ENCODE measurements at regions of chr2 and their contacts with region 1.

Region 1: DNA sequence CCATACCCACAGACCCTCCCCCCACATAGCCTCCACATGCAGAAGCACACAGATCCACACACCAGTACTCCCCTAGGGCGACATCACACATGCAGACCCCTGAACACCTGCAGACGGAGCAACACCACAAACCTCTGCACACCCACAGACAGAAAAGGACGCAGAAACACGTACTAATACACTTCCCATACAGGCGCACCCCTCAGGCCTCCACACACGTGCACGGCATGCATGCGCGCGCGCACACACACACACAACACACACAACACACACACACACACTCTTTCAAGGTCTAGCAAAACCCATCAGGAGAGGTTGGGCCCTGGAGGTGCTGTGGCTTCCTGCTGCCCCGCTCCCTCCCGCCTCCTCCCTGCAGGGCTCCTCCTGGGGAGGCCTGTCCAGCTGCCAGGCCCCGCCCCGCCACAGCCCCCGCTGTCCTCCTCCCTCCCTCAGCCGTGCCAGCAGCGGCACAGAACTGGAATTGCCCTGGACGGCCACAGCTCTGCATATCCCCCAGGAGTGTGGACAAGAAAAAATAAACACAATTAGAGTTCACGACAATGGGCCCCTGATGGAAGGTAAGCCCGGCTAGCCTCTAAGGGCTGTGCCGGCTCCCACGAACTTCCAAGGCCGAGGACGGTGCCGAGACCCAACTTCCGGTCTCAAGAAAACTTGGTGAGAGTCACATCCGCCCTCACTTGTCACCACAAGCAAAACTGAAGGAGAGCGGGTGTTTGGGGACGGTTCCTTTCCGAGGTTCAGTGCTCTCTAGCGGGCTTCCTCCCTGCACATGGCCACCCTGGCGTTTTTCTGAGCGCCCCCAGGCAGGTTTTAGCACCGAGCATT is 6.8 kb downstream of the ZFP36L2 start:
- DNase-seq: peak; percentile 81 to 91
- H3K4me3 ChIP-seq: peak overlapping the region; percentile 72
- H3K27ac ChIP-seq: peak overlapping the region; percentile 92
- H3K4me1 ChIP-seq: peaks cover 51% of the 10 kb centered on the region
- H3K27me3 ChIP-seq: no peaks in the 10 kb centered on the region
- CTCF ChIP-seq: no peak; the same call in 1 of the 2 replicates

Region 2: GRCh38 chr2:42147641-42148274 is 1071.8 kb before region 1 on chr2:
- CTCF ChIA-PET with region 1: no interaction called
- POLR2A ChIA-PET with region 1: interaction called, 12 read pairs
- intact Hi-C with region 1: no loop called
- DNase-seq: no peak
- H3K4me3 ChIP-seq: no peak overlapping the region
- H3K27ac ChIP-seq: no peak overlapping the region
- H3K4me1 ChIP-seq: peaks cover 9% of the 10 kb centered on the region
- H3K27me3 ChIP-seq: no peaks in the 10 kb centered on the region
- CTCF ChIP-seq: no peak

Region 3: DNA sequence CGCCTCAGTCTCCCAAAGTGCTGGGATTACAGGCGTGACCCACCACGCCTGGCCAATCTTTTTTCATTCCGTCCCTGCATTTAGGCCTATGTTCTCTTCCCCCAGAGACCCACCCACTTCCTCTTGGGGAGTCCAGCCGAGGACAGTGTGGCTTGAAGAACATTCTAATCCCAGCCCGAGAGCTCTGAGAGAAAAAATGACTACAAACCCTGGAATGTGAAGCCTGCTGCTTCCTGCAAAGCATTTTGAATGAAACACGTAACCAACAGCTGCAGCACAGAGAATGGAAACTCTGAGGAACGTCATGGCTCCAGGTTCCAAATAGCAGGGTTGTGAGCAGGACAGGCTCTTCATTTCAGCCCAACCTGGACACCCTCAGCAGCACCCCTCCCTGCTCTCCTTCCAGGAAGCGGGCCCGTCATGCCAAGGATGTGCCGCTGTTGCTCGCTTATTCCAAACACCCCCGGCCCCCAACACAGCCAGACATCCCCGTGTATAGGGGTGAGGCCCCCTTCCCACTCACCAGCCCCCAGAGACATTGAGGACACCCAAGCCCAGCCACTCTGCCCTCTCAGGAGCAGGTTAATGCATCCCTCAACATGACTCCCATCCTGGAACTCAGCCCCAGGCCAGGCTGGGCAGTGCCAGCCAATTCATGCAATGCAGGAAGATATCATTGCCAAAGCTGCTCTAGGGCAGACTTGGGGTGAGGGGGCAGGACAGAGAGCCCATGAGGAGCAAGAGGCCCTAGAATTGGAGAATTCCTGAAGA is 133.0 kb before region 1 on chr2:
- CTCF ChIA-PET with region 1: no interaction called
- POLR2A ChIA-PET with region 1: no interaction called
- intact Hi-C with region 1: loop called (anchors 1 kb)
- DNase-seq: peak; percentile 88 to 100
- H3K4me3 ChIP-seq: no peak overlapping the region
- H3K27ac ChIP-seq: peak overlapping the region; percentile 85
- H3K4me1 ChIP-seq: peaks cover 68% of the 10 kb centered on the region
- H3K27me3 ChIP-seq: no peaks in the 10 kb centered on the region
- CTCF ChIP-seq: no peak

Region 4: GRCh38 chr2:43106559-43107527 is 112.8 kb before region 1 on chr2:
- CTCF ChIA-PET with region 1: no interaction called
- POLR2A ChIA-PET with region 1: no interaction called
- intact Hi-C with region 1: no loop called
- DNase-seq: peak in 1 of 2 experiments; percentile 51
- H3K4me3 ChIP-seq: no peak overlapping the region
- H3K27ac ChIP-seq: no peak overlapping the region
- H3K4me1 ChIP-seq: peaks cover 20% of the 10 kb centered on the region
- H3K27me3 ChIP-seq: no peaks in the 10 kb centered on the region
- CTCF ChIP-seq: no peak

Region 5: DNA sequence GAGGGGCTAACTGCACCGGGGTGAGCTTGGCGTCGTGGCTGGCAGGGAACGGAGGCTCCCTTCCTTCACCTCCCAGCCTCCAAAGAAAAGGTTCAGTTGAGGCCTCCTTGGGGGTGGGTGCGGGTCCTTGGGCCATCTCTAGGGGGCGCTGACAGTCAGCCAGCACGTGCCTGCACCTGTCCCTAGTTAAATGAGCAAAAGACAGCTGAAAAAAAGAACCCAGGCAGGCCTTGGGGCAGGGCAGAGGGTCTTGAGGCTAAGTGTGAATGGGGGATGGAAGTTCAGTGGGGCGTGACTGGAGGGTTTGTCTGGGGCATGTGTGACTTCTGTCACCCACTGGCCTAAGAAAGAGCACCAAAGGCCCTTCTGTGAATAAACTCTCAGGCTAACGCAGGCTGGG is 49.6 kb before region 1 on chr2:
- CTCF ChIA-PET with region 1: interaction called, 4 read pairs
- POLR2A ChIA-PET with region 1: interaction called, 5 read pairs
- intact Hi-C with region 1: loop called (anchors 1 kb)
- DNase-seq: peak; percentile 38 to 50
- H3K4me3 ChIP-seq: peak overlapping the region; percentile 53; the same call in 1 of the 2 replicates
- H3K27ac ChIP-seq: peak overlapping the region; percentile 97
- H3K4me1 ChIP-seq: peaks cover 74% of the 10 kb centered on the region
- H3K27me3 ChIP-seq: no peaks in the 10 kb centered on the region
- CTCF ChIP-seq: peak; percentile 96

Region 6: DNA sequence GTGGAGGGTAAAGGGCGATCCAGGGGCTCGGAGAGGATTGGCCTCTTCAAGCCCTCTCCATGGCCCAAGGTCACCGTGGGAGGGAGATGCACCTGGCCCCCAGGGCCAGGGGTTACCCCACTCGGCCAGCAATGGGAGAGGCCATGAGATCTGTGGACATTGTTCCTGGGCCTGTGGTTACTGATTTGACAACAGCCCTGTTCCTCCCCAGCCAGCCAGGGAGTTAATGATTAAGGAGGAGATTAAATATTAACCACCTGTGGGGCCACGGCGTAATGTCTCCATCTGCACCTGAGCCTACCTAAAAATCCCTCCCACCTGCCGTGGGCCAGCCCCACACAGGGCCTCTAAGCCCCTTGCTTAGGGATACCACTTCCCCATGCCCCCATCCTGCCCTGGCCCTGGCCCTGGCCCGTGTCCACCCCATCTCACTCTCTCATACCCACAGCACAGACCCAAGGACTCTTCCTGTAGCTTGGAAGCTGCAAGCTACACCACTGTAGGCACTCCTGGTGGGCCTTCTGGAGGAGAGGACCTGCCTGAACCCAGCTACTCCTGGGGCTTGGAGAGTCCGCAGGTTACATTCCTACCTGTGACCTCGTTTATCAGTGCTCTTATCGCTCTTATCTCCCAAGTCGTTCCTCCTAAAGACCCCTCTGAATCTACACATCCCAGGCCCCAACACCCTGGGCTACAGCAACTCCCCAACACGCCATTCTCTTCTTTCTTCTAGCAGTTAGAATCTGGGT is 25.3 kb before region 1 on chr2:
- CTCF ChIA-PET with region 1: no interaction called
- POLR2A ChIA-PET with region 1: interaction called, 14 read pairs
- intact Hi-C with region 1: no loop called
- DNase-seq: no peak
- H3K4me3 ChIP-seq: no peak overlapping the region
- H3K27ac ChIP-seq: no peak overlapping the region
- H3K4me1 ChIP-seq: peaks cover 28% of the 10 kb centered on the region
- H3K27me3 ChIP-seq: no peaks in the 10 kb centered on the region
- CTCF ChIP-seq: no peak

Region 7: DNA sequence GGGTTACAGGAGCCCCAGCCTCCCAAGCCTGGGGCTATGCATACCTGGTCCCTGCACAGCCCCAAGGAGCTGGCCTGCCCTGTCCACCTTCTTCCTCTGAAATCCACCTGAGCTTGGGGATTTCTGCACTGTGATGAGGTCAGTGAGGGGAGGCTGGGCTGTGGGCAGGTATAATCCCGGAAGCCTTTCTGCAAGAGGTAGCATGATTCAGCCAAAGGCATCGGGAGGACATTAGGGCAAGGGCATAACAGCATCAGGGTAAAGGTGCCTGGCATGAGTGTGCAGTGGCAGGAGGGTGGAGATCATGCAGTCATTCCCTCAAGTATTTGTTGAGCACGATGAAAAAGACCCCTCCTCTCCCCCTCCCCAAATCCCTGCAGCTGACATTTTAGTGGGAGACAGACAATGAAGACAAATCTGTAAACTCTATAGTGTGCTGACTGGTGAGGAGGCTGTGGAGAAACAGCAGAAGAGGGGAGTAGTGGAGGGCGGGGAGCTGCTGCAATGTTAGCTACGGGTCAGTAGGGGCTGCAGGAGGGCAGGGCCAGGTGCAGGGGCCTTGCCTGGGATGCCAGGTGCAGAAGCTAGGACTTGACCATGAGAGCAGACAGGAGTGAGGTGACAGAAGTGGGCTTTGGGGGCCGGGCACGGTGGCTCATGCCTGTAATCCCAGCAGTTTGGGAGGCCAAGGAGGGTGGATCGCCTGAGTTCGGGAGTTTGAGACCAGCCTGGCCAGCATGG is 11.9 kb before region 1 on chr2:
- CTCF ChIA-PET with region 1: no interaction called
- POLR2A ChIA-PET with region 1: interaction called, 24 read pairs
- intact Hi-C with region 1: no loop called
- DNase-seq: peak; percentile 50 to 91
- H3K4me3 ChIP-seq: peak overlapping the region; percentile 6; the same call in 1 of the 2 replicates
- H3K27ac ChIP-seq: peak overlapping the region; percentile 84
- H3K4me1 ChIP-seq: peaks cover 51% of the 10 kb centered on the region
- H3K27me3 ChIP-seq: no peaks in the 10 kb centered on the region
- CTCF ChIP-seq: no peak

Measured in PC-9 (cell line).